CD8-positive, alpha-beta memory T cell (primary cell): ENCODE measurements at regions of chr2 and their contacts with region 1.

Region 1: DNA sequence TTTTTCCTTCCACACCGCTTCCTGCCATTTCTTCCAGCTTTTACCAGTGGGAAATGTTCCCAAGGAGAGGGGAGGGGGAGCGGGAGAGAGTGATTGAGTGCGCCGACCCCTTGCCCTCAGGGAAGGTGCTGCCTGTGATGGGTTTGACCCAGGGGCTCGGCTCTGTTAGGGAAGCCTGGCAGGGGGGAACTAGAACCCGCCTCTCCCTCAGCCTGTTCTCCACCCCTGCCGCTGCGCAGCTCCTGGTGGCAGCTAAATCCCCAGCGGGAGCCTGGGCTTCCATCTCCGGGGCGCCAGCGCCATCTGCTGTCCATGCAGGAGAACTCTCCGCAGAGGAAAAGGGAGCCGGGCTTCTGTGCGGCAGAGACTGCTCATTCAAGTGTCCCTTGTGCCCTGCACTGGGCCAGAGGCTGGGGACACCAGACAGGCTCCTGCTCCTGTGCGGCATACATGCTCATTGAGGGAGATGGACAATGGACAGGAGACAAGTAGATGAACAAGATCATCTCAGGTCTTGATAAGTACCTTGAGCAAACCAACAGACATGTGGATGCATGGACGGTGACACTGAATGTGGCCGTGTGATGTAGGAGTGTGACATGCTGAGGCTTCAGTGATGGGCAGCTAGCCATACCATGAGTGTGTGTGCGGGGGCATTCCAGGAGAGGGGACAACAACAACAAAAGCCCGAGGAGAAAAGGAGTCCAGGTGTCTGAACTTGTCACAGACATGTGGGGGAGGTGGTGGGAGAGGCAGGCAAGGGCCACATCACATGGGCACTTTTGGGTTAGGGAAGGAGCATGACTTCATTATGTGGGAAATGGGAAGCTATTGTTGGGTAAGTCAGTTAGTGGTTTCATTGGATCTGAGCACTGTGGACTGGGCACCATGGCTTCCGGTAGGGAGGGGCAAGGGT is 13.3 kb downstream of the CHPF start:
- DNase-seq: peak; percentile 75 to 87 (median 77)
- H3K4me3 ChIP-seq: no peak overlapping the region
- H3K4me3 Mint-ChIP-seq: no peak overlapping the region
- H3K27ac ChIP-seq: no peak overlapping the region
- H3K27ac Mint-ChIP-seq: peak overlapping the region in 1 of 8 donors; percentile 45
- H3K4me1 ChIP-seq: peaks cover 4% of the 10 kb centered on the region
- H3K4me1 Mint-ChIP-seq: peaks cover 0 to 4% (median 0%) of the 10 kb centered on the region in 3 donors
- H3K27me3 ChIP-seq: peaks cover 23% of the 10 kb centered on the region
- H3K27me3 Mint-ChIP-seq: peaks cover 25 to 73% of the 10 kb centered on the region in 2 donors

Region 2: DNA sequence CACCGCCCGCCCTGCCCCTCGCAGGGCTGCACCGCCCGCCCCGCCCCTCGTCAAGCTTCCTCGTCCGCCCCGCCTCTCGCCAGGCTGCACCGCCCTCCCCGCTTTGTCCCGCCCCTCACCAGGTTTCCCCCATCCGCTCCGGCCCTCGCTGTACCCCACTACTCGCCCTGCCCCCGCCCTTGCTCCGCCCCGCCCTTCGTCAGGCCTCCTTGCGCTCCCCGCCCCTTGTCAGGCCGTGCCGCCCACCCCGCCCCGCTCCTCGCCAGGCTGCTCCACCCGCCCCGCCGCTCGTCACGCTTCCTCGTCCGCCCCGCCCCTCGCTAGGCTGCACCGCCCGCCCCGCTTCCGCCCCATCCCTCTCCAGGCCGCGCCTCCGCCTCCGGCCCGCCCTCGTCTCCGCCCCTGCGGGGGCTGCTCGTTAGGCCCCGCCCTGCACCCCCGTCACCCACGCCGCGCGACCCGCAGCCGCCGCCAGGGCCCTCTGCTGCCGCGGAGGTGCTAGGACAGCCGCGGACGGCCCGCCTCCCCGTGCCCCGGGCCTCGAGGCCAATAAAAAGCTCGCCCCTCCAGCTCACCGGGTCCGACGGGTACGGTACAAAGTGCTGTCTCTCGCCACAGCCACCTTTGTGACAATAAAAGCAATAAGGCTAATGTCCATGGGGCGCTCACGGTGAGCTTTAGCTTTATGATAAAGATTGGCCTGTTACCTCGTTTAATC is 142.0 kb before region 1 on chr2:
- CTCF ChIA-PET with region 1: interaction called, 10 read pairs
- POLR2A ChIA-PET with region 1: interaction called, 3 read pairs
- DNase-seq: peak; percentile 99 to 100 (median 99)
- H3K4me3 ChIP-seq: peak overlapping the region; percentile 61
- H3K4me3 Mint-ChIP-seq: peak overlapping the region; percentile 80 to 99 (median 96)
- H3K27ac ChIP-seq: peak overlapping the region; percentile 34
- H3K27ac Mint-ChIP-seq: peak overlapping the region; percentile 82 to 96 (median 92)
- H3K4me1 ChIP-seq: peaks cover 21% of the 10 kb centered on the region
- H3K4me1 Mint-ChIP-seq: peaks cover 20 to 36% (median 23%) of the 10 kb centered on the region in 3 donors
- H3K27me3 ChIP-seq: no peaks in the 10 kb centered on the region
- H3K27me3 Mint-ChIP-seq: no peaks in the 10 kb centered on the region

Region 3: DNA sequence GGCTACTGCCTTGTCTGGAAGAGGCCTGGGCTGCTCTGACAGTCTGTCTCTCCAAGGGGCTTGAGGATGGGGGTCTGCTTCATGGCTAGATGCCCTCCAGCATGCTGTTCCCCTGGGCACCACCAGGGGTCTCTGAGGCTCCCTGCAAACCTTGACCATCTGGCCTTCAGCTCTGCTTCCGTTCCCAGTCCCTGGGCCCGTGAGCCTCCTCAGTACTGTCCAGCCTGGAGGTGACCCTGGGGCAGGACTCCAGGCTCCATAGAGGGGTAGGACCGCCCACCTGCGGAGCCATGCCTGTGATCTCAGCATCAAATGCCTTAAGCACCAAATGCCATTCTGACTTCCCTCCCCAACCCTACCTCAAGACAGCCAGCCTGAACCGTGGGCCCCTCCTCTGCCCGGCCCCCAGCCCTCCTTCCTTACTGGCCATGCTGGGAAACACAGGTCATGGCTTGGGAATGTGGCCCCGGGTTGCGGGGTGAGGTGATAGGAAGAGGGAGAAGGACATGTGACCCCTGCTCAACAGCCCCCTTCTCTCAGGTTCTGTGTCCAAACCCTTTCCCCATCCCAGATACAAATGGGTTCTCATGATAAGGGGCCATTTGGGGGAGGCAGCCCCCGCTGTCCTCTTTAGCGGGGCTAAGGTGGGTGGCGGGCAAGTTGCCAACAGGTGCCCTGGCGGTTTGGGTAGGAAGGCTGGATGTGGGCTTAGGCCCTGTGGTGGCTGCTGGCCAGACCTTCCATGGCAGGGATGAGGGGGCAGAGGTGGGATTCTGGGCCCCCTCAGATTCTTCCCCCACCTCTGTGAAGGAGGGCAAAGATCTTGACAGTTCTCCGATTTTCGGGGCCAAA is 70.6 kb before region 1 on chr2:
- CTCF ChIA-PET with region 1: interaction called, 30 read pairs
- POLR2A ChIA-PET with region 1: no interaction called
- DNase-seq: peak; percentile 13 to 54 (median 19)
- H3K4me3 ChIP-seq: no peak overlapping the region
- H3K4me3 Mint-ChIP-seq: no peak overlapping the region
- H3K27ac ChIP-seq: no peak overlapping the region
- H3K27ac Mint-ChIP-seq: no peak overlapping the region
- H3K4me1 ChIP-seq: no peaks in the 10 kb centered on the region
- H3K4me1 Mint-ChIP-seq: peaks cover 0 to 2% (median 0%) of the 10 kb centered on the region in 3 donors
- H3K27me3 ChIP-seq: no peaks in the 10 kb centered on the region
- H3K27me3 Mint-ChIP-seq: peaks cover 0 to 3% of the 10 kb centered on the region in 2 donors

Region 4: GRCh38 chr2:219498280-219499057 is 31.8 kb before region 1 on chr2 and contains the start of gene GMPPA:
- CTCF ChIA-PET with region 1: interaction called, 102 read pairs
- POLR2A ChIA-PET with region 1: no interaction called
- DNase-seq: peak; percentile 84 to 95 (median 89)
- H3K4me3 ChIP-seq: peak within 1 kb of the TSS; percentile 77
- H3K4me3 Mint-ChIP-seq: peak within 1 kb of the TSS; percentile 85 to 99 (median 96)
- H3K27ac ChIP-seq: peak within 1 kb of the TSS; percentile 70
- H3K27ac Mint-ChIP-seq: peak within 1 kb of the TSS; percentile 5 to 95 (median 88)
- H3K4me1 ChIP-seq: peaks cover 26% of the 10 kb centered on the region
- H3K4me1 Mint-ChIP-seq: peaks cover 28 to 45% (median 32%) of the 10 kb centered on the region in 3 donors
- H3K27me3 ChIP-seq: peaks cover 30% of the 10 kb centered on the region
- H3K27me3 Mint-ChIP-seq: peaks cover 23 to 42% of the 10 kb centered on the region in 2 donors
- total RNA-seq, gene GMPPA: 36.9 to 37.1 TPM

Region 5: GRCh38 chr2:219543601-219544358 is 13.5 kb after region 1 on chr2 and contains the starts of genes CHPF and TMEM198:
- CTCF ChIA-PET with region 1: interaction called, 44 read pairs
- POLR2A ChIA-PET with region 1: interaction called, 3 read pairs
- DNase-seq: peak; percentile 84 to 94 (median 88)
- H3K4me3 ChIP-seq: peak within 1 kb of the TSS; percentile 81
- H3K4me3 Mint-ChIP-seq: peak within 1 kb of the TSS; percentile 81 to 94 (median 86)
- H3K27ac ChIP-seq: peak within 1 kb of the TSS; percentile 69
- H3K27ac Mint-ChIP-seq: peak within 1 kb of the TSS; percentile 73 to 92 (median 86)
- H3K4me1 ChIP-seq: peaks cover 18% of the 10 kb centered on the region
- H3K4me1 Mint-ChIP-seq: peaks cover 22 to 30% (median 27%) of the 10 kb centered on the region in 3 donors
- H3K27me3 ChIP-seq: no peaks in the 10 kb centered on the region
- H3K27me3 Mint-ChIP-seq: peaks cover 4 to 14% of the 10 kb centered on the region in 2 donors
- total RNA-seq, gene CHPF: 32.9 to 36.5 TPM
- total RNA-seq, gene TMEM198: 5.2 to 6.0 TPM

Region 6: GRCh38 chr2:219576493-219577388 is 46.4 kb after region 1 on chr2:
- CTCF ChIA-PET with region 1: no interaction called
- POLR2A ChIA-PET with region 1: no interaction called
- DNase-seq: no peak
- H3K4me3 ChIP-seq: no peak overlapping the region
- H3K4me3 Mint-ChIP-seq: no peak overlapping the region
- H3K27ac ChIP-seq: peak overlapping the region; percentile 9
- H3K27ac Mint-ChIP-seq: no peak overlapping the region
- H3K4me1 ChIP-seq: no peaks in the 10 kb centered on the region
- H3K4me1 Mint-ChIP-seq: peaks cover 0 to 2% (median 0%) of the 10 kb centered on the region in 3 donors
- H3K27me3 ChIP-seq: peaks cover 8% of the 10 kb centered on the region
- H3K27me3 Mint-ChIP-seq: peaks cover 26 to 67% of the 10 kb centered on the region in 2 donors